Activated CD4-positive, alpha-beta memory T cell treated with anti-CD3 and anti-CD28 coated beads, Interleukin-2, amount 10 ng/mL, durations not matched to agents 7 days and 5 days (primary cell): ENCODE measurements at regions of chr14 and their contacts with region 1.

Region 1: DNA sequence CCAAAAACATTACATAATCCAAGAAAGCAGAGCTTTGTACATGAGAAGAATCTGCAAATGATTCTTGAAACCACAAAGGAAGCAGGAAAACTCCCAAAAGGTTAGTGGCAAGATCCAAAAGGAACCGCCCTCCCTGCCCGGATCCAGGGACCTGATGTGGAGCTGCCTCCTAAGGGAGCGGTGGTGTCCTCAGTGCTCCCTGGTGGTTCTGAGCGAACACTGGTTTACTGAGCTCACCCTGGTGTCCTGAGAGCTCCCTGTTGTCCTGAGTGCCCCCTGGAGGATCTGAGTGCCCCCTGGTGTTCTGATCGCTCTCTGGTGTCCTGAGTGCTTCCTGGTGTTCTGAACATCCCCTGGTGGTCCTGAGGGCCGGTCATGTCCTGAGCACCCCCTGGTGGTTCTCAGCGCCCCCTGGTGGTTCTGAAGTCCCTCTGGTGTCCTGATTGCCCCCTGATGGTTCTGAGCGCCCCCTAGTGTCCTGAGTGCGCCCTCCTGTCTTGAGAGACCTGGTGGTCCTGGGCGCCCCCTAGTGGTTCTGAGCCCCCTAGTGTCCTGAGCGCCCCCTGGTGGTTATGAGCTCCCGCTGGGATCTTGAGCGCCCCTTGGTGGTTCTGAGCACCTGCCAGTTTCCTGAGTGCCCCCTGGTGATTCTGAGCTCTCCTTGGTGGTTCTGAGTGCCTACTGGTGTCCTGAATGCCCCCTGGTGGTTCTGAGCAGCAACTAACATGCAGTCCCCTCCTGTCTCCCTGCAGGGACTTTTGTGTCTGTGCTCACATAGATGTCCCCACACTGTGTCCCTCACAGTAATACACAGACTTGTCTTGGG is 891.1 kb downstream of the TMEM121 start:
- DNase-seq: peak; percentile 93
- H3K4me3 Mint-ChIP-seq: no peak overlapping the region
- H3K27ac Mint-ChIP-seq: no peak overlapping the region
- H3K4me1 Mint-ChIP-seq: peaks cover 1% of the 10 kb centered on the region
- H3K27me3 Mint-ChIP-seq: peaks cover 20% of the 10 kb centered on the region

Region 2: DNA sequence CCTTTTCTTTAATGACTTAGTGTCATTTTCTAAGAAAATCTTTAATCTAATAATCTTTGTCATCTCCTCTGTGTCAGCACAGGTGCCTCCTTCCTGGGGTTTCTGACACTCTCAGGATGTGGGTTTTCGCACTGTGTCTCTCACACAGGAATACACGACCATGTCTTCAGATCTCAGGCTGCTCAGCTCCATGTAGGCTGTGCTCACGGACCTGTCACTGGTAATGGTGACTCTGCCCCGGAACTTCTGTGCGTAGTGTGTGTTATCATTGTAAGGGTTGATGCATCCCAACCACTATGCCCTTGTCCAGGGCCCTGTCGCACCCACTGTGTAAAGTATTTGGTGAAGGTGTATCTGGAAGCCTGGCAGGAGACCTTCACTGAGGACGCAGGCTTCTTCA is 243.2 kb before region 1 on chr14:
- CTCF ChIA-PET with region 1: no interaction called
- POLR2A ChIA-PET with region 1: no interaction called
- DNase-seq: peak; percentile 75
- H3K4me3 Mint-ChIP-seq: peak overlapping the region; percentile 18
- H3K27ac Mint-ChIP-seq: peak overlapping the region; percentile 75
- H3K4me1 Mint-ChIP-seq: peaks cover 61% of the 10 kb centered on the region
- H3K27me3 Mint-ChIP-seq: peaks cover 26% of the 10 kb centered on the region

Region 3: GRCh38 chr14:106286697-106287290 is 130.6 kb before region 1 on chr14:
- CTCF ChIA-PET with region 1: interaction called, 11 read pairs
- POLR2A ChIA-PET with region 1: no interaction called
- DNase-seq: peak; percentile 29
- H3K4me3 Mint-ChIP-seq: no peak overlapping the region
- H3K27ac Mint-ChIP-seq: no peak overlapping the region
- H3K4me1 Mint-ChIP-seq: no peaks in the 10 kb centered on the region
- H3K27me3 Mint-ChIP-seq: peaks cover 23% of the 10 kb centered on the region

Region 4: GRCh38 chr14:106372870-106373652 is 44.4 kb before region 1 on chr14:
- CTCF ChIA-PET with region 1: interaction called, 56 read pairs
- POLR2A ChIA-PET with region 1: interaction called, 3 read pairs
- DNase-seq: peak; percentile 80
- H3K4me3 Mint-ChIP-seq: peak overlapping the region; percentile 33
- H3K27ac Mint-ChIP-seq: no peak overlapping the region
- H3K4me1 Mint-ChIP-seq: peaks cover 26% of the 10 kb centered on the region
- H3K27me3 Mint-ChIP-seq: peaks cover 22% of the 10 kb centered on the region

Region 5: GRCh38 chr14:106395456-106396050 is 21.9 kb before region 1 on chr14:
- CTCF ChIA-PET with region 1: interaction called, 47 read pairs
- POLR2A ChIA-PET with region 1: interaction called, 3 read pairs
- DNase-seq: no peak
- H3K4me3 Mint-ChIP-seq: no peak overlapping the region
- H3K27ac Mint-ChIP-seq: peak overlapping the region; percentile 78
- H3K4me1 Mint-ChIP-seq: peaks cover 38% of the 10 kb centered on the region
- H3K27me3 Mint-ChIP-seq: peaks cover 19% of the 10 kb centered on the region

Region 6: GRCh38 chr14:106455026-106455425 is 37.6 kb after region 1 on chr14:
- CTCF ChIA-PET with region 1: interaction called, 16 read pairs
- POLR2A ChIA-PET with region 1: no interaction called
- DNase-seq: no peak
- H3K4me3 Mint-ChIP-seq: no peak overlapping the region
- H3K27ac Mint-ChIP-seq: no peak overlapping the region
- H3K4me1 Mint-ChIP-seq: peaks cover 6% of the 10 kb centered on the region
- H3K27me3 Mint-ChIP-seq: peaks cover 27% of the 10 kb centered on the region

Region 7: GRCh38 chr14:106511006-106511799 is 93.8 kb after region 1 on chr14:
- CTCF ChIA-PET with region 1: interaction called, 40 read pairs
- POLR2A ChIA-PET with region 1: no interaction called
- DNase-seq: peak; percentile 70
- H3K4me3 Mint-ChIP-seq: peak overlapping the region; percentile 11
- H3K27ac Mint-ChIP-seq: peak overlapping the region; percentile 82
- H3K4me1 Mint-ChIP-seq: peaks cover 66% of the 10 kb centered on the region
- H3K27me3 Mint-ChIP-seq: peaks cover 32% of the 10 kb centered on the region

Region 8: DNA sequence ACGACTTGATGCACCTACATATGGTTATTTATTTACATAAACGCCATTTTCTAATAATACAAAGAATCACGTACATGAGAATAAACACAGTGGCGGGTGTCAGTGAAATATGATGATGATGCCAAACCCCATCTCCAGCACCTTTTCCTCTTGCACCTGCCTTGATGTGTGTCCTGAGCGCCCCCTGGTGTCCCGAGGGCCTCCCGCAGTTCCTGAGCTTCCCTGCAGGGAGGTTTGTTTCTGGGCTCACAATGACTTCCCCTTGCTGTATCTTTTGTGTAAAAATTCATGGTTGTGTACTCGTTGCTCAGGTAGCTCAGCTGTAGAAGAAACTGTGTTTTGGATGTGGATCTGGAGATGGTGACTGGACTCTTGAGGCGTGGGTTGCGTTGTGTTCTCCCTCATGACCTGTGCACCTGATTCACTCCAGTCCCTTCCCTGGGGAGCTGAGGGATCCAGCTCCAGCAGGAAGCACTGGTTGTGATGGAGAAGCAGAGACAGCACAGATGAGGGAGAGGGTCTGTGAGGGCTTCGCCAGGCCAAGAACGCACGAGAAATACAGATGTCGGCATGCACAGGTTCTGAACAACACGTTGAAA is 146.7 kb after region 1 on chr14:
- CTCF ChIA-PET with region 1: interaction called, 14 read pairs
- POLR2A ChIA-PET with region 1: no interaction called
- DNase-seq: peak; percentile 71
- H3K4me3 Mint-ChIP-seq: no peak overlapping the region
- H3K27ac Mint-ChIP-seq: no peak overlapping the region
- H3K4me1 Mint-ChIP-seq: no peaks in the 10 kb centered on the region
- H3K27me3 Mint-ChIP-seq: peaks cover 54% of the 10 kb centered on the region